Ovary (tissue), 10 donors: ENCODE measurements at regions of chr12 and their contacts with region 1.

Region 1: DNA sequence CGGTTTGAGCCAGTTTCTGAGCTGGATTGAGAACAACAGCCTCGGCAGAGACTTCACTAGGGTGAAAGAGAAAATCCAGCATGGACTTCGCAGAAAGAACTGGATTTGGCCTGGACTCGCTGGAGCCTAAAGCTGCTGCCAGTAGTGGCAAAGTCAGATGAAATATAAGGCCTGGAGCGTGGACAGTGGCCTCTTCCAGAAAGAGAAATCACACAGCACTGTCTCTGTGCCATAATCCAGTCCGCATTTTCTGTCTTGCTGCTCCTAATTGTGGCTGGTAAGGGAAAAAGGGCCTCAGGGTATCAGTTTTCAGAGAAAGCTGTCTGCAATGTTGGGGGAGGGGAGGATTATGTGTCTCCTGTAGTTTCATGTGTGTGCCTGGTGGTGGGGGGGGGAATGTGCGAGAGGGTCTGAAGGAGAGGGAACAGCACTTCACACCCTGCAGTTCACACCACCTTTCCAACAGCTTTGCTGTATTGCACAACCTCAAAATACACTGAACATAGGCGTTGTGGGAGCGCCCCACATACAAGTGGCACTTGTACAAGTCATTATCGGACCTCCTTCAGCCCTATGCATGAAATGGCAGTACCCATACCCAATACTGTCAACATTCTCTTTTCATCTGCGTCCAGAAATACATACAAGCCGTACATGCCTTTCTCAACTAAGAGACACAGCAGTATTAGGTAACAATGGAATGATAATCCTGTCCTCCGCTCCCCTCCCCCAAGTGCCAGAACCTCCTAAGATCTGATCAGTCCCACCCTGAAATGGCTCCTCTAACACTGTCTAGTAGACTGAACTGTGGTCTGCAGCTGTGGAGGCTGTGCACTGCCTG is 107.5 kb upstream of the ATF7IP start:
- DNase-seq: peak; percentile 33 to 95 (median 75)
- H3K4me3 ChIP-seq: no peak overlapping the region
- H3K27ac ChIP-seq: peak overlapping the region; percentile 71 to 74
- H3K4me1 ChIP-seq: peaks cover 19% of the 10 kb centered on the region
- H3K27me3 ChIP-seq: no peaks in the 10 kb centered on the region
- CTCF ChIP-seq: peak in 1 of 3 donors; percentile 43
- EP300 ChIP-seq: no peak
- POLR2A ChIP-seq: peak; percentile 72

Region 2: GRCh38 chr12:14167005-14167628 is 90.8 kb before region 1 on chr12:
- intact Hi-C with region 1: no loop called
- DNase-seq: peak in 2 of 5 donors; percentile 28 to 29
- H3K4me3 ChIP-seq: no peak overlapping the region
- H3K27ac ChIP-seq: no peak overlapping the region
- H3K4me1 ChIP-seq: no peaks in the 10 kb centered on the region
- H3K27me3 ChIP-seq: no peaks in the 10 kb centered on the region
- CTCF ChIP-seq: peak; percentile 33 to 59 (median 36)
- EP300 ChIP-seq: no peak
- POLR2A ChIP-seq: no peak

Region 3: GRCh38 chr12:14284184-14284722 is 26.3 kb after region 1 on chr12:
- intact Hi-C with region 1: loop called in 1 of 4 experiments (anchors 2 kb)
- DNase-seq: peak; percentile 80 to 89 (median 84)
- H3K4me3 ChIP-seq: no peak overlapping the region
- H3K27ac ChIP-seq: peak overlapping the region in 1 of 2 donors; percentile 66
- H3K4me1 ChIP-seq: peaks cover 3% of the 10 kb centered on the region
- H3K27me3 ChIP-seq: no peaks in the 10 kb centered on the region
- CTCF ChIP-seq: peak in 1 of 3 donors; percentile 37
- EP300 ChIP-seq: peak; percentile 9
- POLR2A ChIP-seq: no peak

Region 4: GRCh38 chr12:14365294-14366208 is 107.6 kb after region 1 on chr12 and contains the start of gene ATF7IP:
- intact Hi-C with region 1: loop called in 3 of 4 experiments (anchors 2 to 10 kb)
- DNase-seq: peak; percentile 93 to 96 (median 95)
- H3K4me3 ChIP-seq: peak within 1 kb of the TSS; percentile 68
- H3K27ac ChIP-seq: peak within 1 kb of the TSS; percentile 89 to 91
- H3K4me1 ChIP-seq: peaks cover 2% of the 10 kb centered on the region
- H3K27me3 ChIP-seq: no peaks in the 10 kb centered on the region
- CTCF ChIP-seq: peak in 2 of 3 donors; percentile 7 to 26
- EP300 ChIP-seq: no peak
- POLR2A ChIP-seq: peak; percentile 86
- total RNA-seq, gene ATF7IP: 34.8 to 91.5 (median 78.4) TPM